Body of pancreas (tissue), 4 donors: ENCODE measurements at regions of chr17 and their contacts with region 1.

Region 1: DNA sequence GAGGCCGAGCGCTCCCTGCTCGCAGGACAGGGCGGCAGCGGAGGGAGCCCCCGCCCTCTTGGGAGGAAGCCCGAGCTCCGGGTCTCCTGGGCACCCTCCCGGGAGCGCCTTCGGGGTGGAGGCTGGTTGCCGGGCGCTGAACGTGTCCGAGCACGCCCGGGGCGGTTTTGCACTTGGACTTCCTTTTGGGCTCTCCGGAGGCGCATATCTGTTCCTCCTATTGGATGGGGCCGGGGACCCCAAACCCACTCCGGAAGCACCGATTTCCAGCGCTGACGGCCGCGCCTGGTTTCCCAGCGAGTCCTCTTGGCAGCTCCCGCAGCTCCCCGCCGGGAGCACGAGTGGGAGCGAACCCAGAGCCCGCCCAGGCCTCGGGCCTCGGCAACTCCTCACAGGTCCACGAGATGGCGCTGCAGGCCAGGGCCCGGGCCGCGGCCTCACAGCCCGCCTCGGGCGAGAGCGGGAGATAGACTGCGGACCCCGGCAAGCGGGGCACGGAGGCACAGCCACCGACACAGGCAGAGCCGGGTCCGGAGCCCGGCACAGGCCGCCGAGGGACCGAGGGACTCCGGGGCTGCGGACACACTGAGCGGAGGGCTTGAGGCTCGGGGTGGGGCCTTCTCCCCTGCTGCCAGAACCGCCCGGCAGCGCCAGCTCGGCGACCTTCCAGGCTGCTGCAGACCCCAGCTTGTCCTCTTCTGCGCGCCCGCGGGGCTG is 12.7 kb downstream of the TBX2 start:
- DNase-seq: peak; percentile 63 to 78 (median 74)
- ATAC-seq: peak; percentile 74
- H3K4me3 ChIP-seq: peak overlapping the region; percentile 33 to 35
- H3K27ac ChIP-seq: peak overlapping the region in 3 of 4 donors; percentile 22 to 72 (median 53)
- H3K4me1 ChIP-seq: peaks cover 42% of the 10 kb centered on the region
- H3K27me3 ChIP-seq: peaks cover 0 to 18% of the 10 kb centered on the region in 2 donors
- CTCF ChIP-seq: peak; percentile 94 to 99 (median 97)
- POLR2A ChIP-seq: peak in 1 of 3 donors; percentile 24

Region 2: DNA sequence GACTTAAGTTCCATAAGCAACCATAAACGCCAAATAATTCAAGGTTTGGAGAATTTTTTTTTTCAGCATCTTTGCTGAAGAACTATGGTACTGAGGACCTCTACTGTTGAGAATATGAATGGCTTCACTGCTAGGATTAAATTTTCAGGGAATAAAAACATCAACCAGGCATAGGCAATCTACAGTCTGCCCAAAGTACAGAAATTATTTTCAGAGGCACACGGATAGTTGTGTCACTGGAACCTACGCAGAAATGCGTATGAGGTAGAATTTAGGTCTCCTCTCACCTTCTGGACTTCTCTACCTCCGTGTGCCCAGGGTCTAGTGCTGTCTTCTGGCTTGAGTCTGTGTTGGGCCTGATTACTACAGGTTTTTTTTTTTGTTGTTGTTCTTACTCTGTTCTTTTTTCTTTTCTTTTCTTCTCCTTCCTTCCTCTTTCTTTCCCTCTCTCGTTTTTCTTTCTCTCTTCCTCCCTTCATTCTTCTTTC is 139.0 kb after region 1 on chr17:
- intact Hi-C with region 1: loop called (anchors 10 kb)
- DNase-seq: no peak
- ATAC-seq: no peak
- H3K4me3 ChIP-seq: no peak overlapping the region
- H3K27ac ChIP-seq: no peak overlapping the region
- H3K4me1 ChIP-seq: no peaks in the 10 kb centered on the region
- H3K27me3 ChIP-seq: no peaks in the 10 kb centered on the region
- CTCF ChIP-seq: peak; percentile 23 to 75 (median 70)
- POLR2A ChIP-seq: no peak

Region 3: DNA sequence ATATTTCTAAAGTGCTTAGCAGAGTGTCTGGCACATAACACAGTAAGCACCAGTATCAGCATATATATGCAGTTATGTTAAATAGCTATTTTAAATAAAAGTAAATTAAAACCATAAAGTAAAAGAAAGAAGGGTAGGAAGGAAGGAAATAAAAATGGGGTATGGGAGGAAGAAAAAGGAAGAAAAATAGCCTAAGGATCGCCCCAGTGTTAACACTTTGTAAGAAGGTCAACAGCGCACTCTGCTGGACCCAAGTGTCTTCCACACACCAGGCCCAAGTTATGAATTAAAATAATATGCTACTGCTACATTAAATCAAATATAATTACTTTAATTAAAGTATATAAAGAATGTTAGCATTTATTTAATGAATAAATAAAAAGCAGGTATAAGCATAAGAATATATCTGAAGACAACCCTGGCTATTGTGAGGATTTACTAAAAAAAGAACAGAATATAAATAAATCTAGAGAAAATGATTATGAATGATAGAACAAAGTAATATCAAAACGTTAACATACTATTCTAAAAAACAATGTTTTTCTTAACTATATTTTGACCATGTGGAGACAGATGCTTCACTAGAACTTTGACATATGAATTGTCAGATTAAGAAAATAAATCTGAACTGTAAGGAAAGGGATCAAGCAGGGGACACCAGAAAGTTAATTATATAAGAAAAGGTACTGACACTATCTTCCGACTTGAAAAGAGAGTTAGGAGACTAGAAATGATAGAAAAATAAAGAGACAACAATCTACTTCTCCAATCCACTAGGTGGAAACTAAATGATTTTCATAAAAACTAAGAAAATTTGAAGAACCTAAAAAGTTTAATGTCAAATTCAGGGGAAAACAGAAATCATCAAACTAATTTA is 425.1 kb after region 1 on chr17:
- intact Hi-C with region 1: loop called (anchors 10 kb)
- DNase-seq: peak; percentile 54 to 75 (median 66)
- ATAC-seq: no peak
- H3K4me3 ChIP-seq: no peak overlapping the region
- H3K27ac ChIP-seq: no peak overlapping the region
- H3K4me1 ChIP-seq: no peaks in the 10 kb centered on the region
- H3K27me3 ChIP-seq: no peaks in the 10 kb centered on the region
- CTCF ChIP-seq: peak; percentile 36 to 87 (median 69)
- POLR2A ChIP-seq: no peak